ENCODE measurements at regions of chr20 and their contacts with region 1.

Region 1: GRCh38 chr20:45406259-45407066 is 1.6 kb upstream of the DBNDD2 start:
- DNase-seq: peak; percentile 76
- ATAC-seq: peak; percentile 50
- H3K4me3 Mint-ChIP-seq: peak overlapping the region; percentile 84
- H3K27ac Mint-ChIP-seq: peak overlapping the region; percentile 86; the same call in 1 of the 2 replicates
- H3K4me1 Mint-ChIP-seq: peaks cover 12% of the 10 kb centered on the region
- H3K27me3 Mint-ChIP-seq: peaks cover 29% of the 10 kb centered on the region
- CTCF ChIP-seq: no peak

Region 2: DNA sequence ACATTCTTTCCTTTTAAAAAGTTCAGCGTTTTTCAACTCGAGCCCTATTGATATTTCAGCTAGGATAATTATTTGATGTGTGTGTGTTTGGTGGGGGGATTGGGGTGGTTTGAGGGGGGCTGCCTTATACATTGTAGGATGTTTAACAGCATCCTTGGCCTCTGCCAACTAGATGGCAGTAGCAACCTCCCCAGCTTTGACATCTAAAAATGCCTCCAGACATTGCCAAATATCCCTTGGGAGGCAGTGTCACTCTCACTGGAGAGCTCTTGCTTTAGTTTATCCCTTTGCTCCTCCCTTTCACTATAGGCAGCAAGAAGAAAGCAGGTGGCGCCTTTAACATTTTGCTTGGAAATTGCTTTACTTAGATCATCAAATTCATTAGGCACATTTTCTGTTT is 13.7 kb before region 1 on chr20:
- CTCF ChIA-PET with region 1: interaction called, 10 read pairs
- POLR2A ChIA-PET with region 1: no interaction called
- DNase-seq: no peak
- ATAC-seq: peak; percentile 69
- H3K4me3 Mint-ChIP-seq: no peak overlapping the region
- H3K27ac Mint-ChIP-seq: no peak overlapping the region
- H3K4me1 Mint-ChIP-seq: no peaks in the 10 kb centered on the region
- H3K27me3 Mint-ChIP-seq: no peaks in the 10 kb centered on the region
- CTCF ChIP-seq: no peak